ENCODE measurements at regions of chr5 and their contacts with region 1.

Region 1: GRCh38 chr5:42908509-42909488 is 97.1 kb upstream of the SELENOP start:
- DNase-seq: peak; percentile 95 to 96
- ATAC-seq: peak; percentile 95
- H3K4me3 ChIP-seq: peak overlapping the region; percentile 52 to 74
- H3K27ac ChIP-seq: no peak overlapping the region
- H3K4me1 ChIP-seq: no peaks in the 10 kb centered on the region
- H3K27me3 ChIP-seq: no peaks in the 10 kb centered on the region

Region 2: GRCh38 chr5:42301349-42301748 is 607.5 kb before region 1 on chr5:
- intact Hi-C with region 1: no loop called
- DNase-seq: no peak
- ATAC-seq: no peak
- H3K4me3 ChIP-seq: no peak overlapping the region
- H3K27ac ChIP-seq: no peak overlapping the region
- H3K4me1 ChIP-seq: no peaks in the 10 kb centered on the region
- H3K27me3 ChIP-seq: peaks cover 0 to 3% of the 10 kb centered on the region in 2 donors

Region 3: DNA sequence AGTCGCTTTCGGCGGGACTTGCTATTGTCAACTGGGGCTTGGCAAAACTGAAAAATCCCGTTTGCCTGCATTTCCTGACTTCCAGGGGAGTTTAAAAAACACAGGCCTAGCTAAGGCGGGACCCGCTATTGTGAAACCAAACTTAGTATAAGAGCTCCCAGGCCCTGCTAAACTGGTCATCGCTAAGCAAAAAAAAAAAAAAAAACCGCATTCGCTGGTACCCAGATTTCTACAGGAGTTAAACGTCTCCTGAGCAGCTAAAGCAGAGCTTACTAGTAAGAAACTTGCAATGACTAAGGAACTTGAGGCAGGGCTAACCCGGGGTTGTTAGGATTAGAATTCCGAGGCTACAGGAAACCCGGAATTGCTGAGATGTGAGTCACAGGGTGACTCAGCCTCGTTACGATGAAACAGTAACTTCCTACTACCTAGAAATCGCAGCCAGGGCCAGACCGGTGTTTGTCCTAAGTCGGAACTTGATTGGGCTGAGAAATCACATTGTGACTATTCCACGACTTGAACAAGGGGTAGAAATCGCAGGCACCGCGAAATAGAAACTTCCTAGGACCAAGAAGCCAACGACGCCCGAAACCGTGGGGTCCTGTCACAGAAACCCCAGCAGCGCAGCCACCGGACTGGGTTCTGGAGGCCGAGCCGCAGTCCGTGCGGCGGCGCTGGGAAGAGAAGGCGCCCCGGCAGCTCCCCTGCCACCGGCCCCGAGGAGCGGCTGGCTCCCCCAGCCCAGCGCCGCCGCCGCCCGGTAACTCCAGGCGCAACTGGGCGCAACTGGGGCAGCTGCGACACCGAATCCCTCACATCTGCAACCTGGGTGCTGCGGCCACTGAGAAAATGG is 41.9 kb after region 1 on chr5:
- intact Hi-C with region 1: loop called in 1 of 2 experiments (anchors 5 kb)
- DNase-seq: peak; percentile 88
- ATAC-seq: peak; percentile 86
- H3K4me3 ChIP-seq: peak overlapping the region; percentile 11 to 58
- H3K27ac ChIP-seq: peak overlapping the region in 1 of 2 donors; percentile 78
- H3K4me1 ChIP-seq: no peaks in the 10 kb centered on the region
- H3K27me3 ChIP-seq: no peaks in the 10 kb centered on the region

Region 4: GRCh38 chr5:43073597-43074546 is 165.1 kb after region 1 on chr5:
- intact Hi-C with region 1: no loop called
- DNase-seq: no peak
- ATAC-seq: no peak
- H3K4me3 ChIP-seq: no peak overlapping the region
- H3K27ac ChIP-seq: no peak overlapping the region
- H3K4me1 ChIP-seq: no peaks in the 10 kb centered on the region
- H3K27me3 ChIP-seq: no peaks in the 10 kb centered on the region

Region 5: GRCh38 chr5:43105369-43106289 is 196.8 kb after region 1 on chr5:
- intact Hi-C with region 1: loop called in 1 of 2 experiments (anchors 5 kb)
- DNase-seq: peak; percentile 93 to 96
- ATAC-seq: peak; percentile 98
- H3K4me3 ChIP-seq: peak overlapping the region in 1 of 2 donors; percentile 25
- H3K27ac ChIP-seq: no peak overlapping the region
- H3K4me1 ChIP-seq: no peaks in the 10 kb centered on the region
- H3K27me3 ChIP-seq: no peaks in the 10 kb centered on the region

Region 6: DNA sequence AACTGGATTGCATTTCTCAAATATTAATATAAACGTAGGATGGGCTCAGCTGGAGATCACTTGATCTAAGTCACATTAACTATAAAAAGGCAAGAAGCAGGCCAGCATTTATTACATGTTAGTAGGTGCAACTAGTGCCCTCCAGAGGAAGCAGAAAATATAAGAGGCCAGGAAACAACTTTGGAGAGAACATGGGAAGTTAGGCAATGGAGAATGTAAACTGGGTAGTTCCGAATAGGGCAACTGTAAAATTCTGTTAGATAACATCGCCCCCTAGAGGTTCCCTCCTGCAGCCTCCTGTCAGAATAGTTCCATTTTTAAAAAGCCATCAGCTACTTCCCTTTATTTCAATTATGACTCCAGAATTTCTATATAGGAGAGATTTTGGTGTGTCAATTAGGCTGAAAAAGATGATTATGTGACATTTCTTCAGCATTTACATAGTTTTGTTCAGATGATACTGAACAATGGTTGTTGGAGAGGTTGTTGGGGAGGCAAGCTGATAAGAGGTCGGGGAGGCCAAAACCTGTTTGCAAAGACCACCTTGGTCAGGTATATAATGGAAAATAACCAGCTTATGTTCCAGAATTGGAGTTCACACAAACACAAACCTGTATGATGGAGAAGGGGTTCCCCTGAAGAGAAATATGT is 481.0 kb after region 1 on chr5:
- intact Hi-C with region 1: loop called in 1 of 2 experiments (anchors 5 kb)
- DNase-seq: peak in 1 of 2 donors; percentile 59
- ATAC-seq: peak; percentile 87
- H3K4me3 ChIP-seq: no peak overlapping the region
- H3K27ac ChIP-seq: no peak overlapping the region
- H3K4me1 ChIP-seq: no peaks in the 10 kb centered on the region
- H3K27me3 ChIP-seq: no peaks in the 10 kb centered on the region

Measured in aorta (tissue), 5 donors.